ENCODE measurements at regions of chr3 and their contacts with region 1.

Region 1: DNA sequence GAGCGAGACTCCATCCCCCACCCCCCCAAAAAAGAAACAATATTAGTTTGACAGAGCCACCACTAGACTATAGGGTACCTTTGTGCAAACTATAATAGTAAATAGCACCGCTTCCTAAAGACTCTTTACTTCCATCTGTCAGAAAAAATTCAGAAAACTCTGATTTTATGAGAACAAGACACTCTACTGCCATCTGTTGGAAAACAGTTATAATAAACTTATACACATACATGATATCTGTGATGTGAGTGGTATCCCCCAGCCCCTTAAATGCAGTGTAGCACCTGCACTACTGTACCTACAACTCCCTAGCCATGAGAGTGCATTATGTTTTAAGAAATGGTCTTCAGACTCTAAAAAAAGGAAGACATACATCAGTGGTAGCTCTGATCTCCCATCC is 47.1 kb upstream of the CTDSPL start:
- DNase-seq: no peak
- H3K4me3 Mint-ChIP-seq: no peak overlapping the region
- H3K27ac Mint-ChIP-seq: no peak overlapping the region
- H3K4me1 Mint-ChIP-seq: no peaks in the 10 kb centered on the region
- H3K27me3 Mint-ChIP-seq: no peaks in the 10 kb centered on the region

Region 2: DNA sequence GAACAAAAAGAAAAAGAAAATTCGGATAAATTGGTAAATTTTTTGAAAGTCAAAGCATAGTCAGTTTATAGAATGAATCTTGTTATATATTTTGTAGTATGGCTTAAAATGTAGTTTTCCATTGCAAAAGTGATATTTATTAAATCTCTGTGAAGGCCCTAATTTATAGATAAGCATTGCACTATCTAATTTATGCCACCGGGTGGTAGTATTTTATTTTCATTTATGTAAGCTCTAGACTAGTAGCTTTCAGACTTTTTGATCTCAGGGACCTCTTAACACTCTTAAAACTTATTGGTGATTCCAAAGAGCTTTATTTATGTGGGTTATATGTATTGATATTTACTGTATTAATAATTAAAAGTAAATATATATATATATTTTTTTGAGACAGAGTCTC is 506.3 kb before region 1 on chr3:
- CTCF ChIA-PET with region 1: no interaction called
- intact Hi-C with region 1: loop called (anchors 5 kb)
- DNase-seq: no peak
- H3K4me3 Mint-ChIP-seq: no peak overlapping the region
- H3K27ac Mint-ChIP-seq: no peak overlapping the region
- H3K4me1 Mint-ChIP-seq: peaks cover 18% of the 10 kb centered on the region
- H3K27me3 Mint-ChIP-seq: no peaks in the 10 kb centered on the region

Measured in activated naive CD4-positive, alpha-beta T cell treated with anti-CD3 and anti-CD28 coated beads for 36 hours (primary cell).